H1 (cell line): ENCODE measurements at regions of chr20 and their contacts with region 1.

Region 1: DNA sequence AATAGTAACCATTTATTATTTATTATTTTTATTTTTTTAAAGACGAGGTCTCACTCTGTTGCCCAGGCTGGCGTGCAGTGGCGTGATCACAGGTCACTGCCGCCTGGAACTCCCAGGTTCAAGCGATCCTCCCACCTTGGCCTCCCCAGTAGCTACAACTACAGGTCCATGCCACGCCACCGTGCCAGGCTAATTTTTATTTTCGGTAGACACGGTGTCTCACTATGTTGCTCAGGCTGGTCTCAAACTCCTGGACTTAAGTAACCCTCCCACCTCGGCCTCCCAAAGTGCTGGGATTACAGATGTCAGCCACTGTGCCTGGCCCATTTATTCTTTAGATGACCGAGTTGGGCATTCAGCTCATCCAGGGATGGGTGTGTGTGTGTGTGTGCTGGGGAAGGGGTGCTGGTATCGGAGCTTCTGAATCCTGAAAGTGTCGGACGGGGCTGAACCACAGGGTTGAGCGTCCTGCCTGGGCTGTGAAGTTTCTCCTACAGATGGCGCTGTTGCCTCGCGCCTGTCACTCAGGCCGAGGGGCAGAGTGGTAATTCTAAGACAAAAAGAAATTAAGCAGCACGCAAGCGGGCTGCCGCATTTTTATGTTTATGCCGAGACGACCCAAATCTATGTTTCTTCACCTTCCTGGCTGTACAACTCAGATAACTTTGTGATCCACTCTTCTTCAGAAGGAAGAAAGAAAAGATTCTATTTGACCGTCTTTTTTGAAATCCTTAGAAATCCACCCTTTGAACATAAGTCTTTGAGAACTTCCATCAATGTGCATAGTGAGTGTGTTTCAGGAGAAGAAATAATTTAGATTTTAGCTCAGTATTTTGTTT is 252.8 kb downstream of the CDH26 start:
- DNase-seq: peak; percentile 34 to 90
- H3K4me3 ChIP-seq: no peak overlapping the region
- H3K27ac ChIP-seq: no peak overlapping the region
- H3K4me1 ChIP-seq: no peaks in the 10 kb centered on the region; a peak in 1 of 7 replicates
- H3K27me3 ChIP-seq: no peaks in the 10 kb centered on the region; a peak in 1 of 7 replicates
- CTCF ChIP-seq: peak; percentile 87 to 93 (median 92)
- EP300 ChIP-seq: no peak
- POLR2A ChIP-seq: no peak
- RAD21 ChIP-seq: peak; percentile 93 to 95

Region 2: GRCh38 chr20:60078351-60079250 is 132.4 kb before region 1 on chr20:
- CTCF ChIA-PET with region 1: no interaction called
- POLR2A ChIA-PET with region 1: no interaction called
- DNase-seq: no peak
- H3K4me3 ChIP-seq: no peak overlapping the region
- H3K27ac ChIP-seq: no peak overlapping the region
- H3K4me1 ChIP-seq: no peaks in the 10 kb centered on the region
- H3K27me3 ChIP-seq: peaks cover 0 to 3% (median 2%) of the 10 kb centered on the region in 4 experiments; a peak in 2 of 7 replicates
- CTCF ChIP-seq: no peak
- EP300 ChIP-seq: no peak
- POLR2A ChIP-seq: no peak
- RAD21 ChIP-seq: no peak

Region 3: DNA sequence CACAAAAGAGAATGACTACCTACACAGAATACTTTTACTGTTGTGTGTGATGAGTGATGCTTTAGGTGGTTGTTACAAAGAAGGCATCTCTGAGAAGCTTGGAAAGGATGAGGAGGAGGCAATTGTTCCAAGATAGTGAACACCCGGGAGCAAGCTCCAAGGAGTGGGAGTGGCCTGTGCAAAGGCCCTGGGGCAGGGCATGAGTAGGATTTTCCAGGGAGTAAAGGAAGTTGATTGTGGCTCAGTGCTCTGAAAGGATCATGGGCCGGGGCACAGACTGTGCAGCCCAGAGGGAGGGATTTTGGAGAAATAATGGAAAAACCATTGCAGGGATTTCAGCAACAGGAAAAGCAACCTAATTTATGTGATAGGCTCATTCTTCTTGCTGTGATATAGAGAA is 11.5 kb after region 1 on chr20:
- CTCF ChIA-PET with region 1: interaction called, 12 read pairs
- POLR2A ChIA-PET with region 1: no interaction called
- DNase-seq: no peak
- H3K4me3 ChIP-seq: no peak overlapping the region
- H3K27ac ChIP-seq: no peak overlapping the region
- H3K4me1 ChIP-seq: no peaks in the 10 kb centered on the region
- H3K27me3 ChIP-seq: no peaks in the 10 kb centered on the region; a peak in 1 of 7 replicates
- CTCF ChIP-seq: no peak
- EP300 ChIP-seq: no peak
- POLR2A ChIP-seq: no peak
- RAD21 ChIP-seq: no peak

Region 4: DNA sequence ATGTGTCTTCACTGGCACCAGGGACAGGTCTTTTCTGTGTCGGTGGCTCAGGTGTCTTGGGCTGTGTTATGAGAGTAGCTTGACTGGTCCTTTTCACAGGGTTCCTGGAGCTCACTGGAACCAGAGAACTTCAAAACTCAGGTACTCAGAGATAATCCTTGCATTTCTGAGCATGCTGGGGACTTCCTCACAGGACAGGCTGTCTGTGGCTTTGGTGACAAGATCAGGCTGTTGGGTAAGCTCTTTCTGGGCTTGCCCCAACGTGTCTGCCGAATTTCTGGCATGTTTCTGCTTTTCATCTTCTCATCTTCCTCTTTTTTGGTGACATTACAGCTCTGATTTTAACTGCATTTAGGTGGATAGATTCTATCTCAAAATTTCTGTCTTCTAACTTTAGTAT is 17.3 kb after region 1 on chr20:
- CTCF ChIA-PET with region 1: interaction called, 12 read pairs
- POLR2A ChIA-PET with region 1: no interaction called
- DNase-seq: no peak
- H3K4me3 ChIP-seq: no peak overlapping the region
- H3K27ac ChIP-seq: no peak overlapping the region
- H3K4me1 ChIP-seq: no peaks in the 10 kb centered on the region
- H3K27me3 ChIP-seq: no peaks in the 10 kb centered on the region
- CTCF ChIP-seq: no peak
- EP300 ChIP-seq: no peak
- POLR2A ChIP-seq: no peak
- RAD21 ChIP-seq: no peak

Region 5: DNA sequence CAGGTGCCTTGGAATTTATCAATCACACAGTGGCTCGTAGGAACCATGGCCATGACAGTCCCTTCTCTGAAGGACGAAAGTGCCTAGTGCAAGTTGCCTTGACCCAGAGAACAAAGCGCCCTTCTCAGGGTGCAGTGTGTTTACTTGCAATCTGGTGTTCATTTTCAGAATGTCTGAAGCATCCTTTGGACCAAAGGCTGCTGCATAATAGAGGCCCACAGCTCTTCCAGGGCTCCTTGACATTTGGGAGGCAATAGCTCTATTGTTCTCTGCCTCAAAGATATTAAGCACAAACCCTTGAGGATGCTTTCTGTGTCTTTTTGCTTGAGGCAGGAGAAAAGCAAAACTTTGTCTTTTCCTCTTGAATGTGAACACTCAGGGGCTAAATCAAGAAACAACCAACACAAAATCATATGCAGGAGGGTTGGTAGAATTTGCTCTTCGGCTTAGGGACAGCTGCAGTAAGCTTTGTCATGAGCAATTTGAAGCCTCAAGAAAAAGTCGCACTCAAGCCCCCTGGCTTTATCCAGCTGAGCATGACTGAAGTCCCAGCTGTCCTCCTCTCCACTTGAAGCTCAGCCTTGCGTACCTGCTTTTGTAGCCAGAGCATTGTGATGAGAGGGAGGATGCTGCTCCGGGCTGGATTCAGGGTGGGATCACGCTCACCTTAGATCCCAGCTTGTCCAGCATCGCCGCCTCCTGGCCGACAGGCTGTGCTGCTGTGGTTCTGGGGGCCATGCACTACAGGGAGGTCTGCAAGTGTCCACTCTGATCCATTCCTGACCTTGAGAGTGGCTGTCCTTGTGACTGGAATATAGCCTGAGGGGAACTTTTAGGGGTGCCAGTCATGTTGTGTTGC is 242.6 kb after region 1 on chr20:
- CTCF ChIA-PET with region 1: interaction called, 31 read pairs
- POLR2A ChIA-PET with region 1: no interaction called
- DNase-seq: peak; percentile 36 to 67
- H3K4me3 ChIP-seq: no peak overlapping the region
- H3K27ac ChIP-seq: no peak overlapping the region
- H3K4me1 ChIP-seq: no peaks in the 10 kb centered on the region
- H3K27me3 ChIP-seq: no peaks in the 10 kb centered on the region; a peak in 3 of 7 replicates
- CTCF ChIP-seq: peak; percentile 73 to 92 (median 88)
- EP300 ChIP-seq: no peak
- POLR2A ChIP-seq: no peak
- RAD21 ChIP-seq: peak; percentile 90